ENCODE measurements at regions of chr10 and their contacts with region 1.

Region 1: DNA sequence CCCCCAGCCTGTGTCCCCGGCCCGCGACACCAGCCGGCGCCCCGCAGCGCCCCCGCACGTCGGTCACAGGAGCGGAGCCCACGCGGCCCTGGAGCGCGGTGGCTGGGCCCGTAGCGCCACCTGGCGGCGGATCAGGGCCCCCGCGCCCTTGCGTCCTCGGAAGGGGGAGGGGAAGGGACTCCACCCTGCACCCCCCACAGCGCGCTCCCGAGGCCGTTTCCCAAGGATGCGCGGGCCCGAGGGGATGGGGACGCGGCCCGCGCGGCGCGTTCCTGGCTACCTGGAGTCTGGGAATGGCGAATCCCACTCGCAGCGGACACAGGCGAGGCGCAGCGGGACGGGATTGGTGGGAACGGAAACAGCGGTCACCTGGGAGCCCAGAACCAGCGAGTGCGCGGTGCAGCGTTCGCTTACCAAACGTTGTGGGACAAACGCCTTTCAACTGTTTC is 23.8 kb upstream of the MKI67 start:
- DNase-seq: no peak
- ATAC-seq: peak; percentile 94
- H3K4me3 ChIP-seq: peak overlapping the region; percentile 86
- H3K27ac ChIP-seq: no peak overlapping the region
- H3K4me1 ChIP-seq: peaks cover 8% of the 10 kb centered on the region
- H3K27me3 ChIP-seq: no peaks in the 10 kb centered on the region; a peak in 1 of 4 replicates
- CTCF ChIP-seq: peak; percentile 80 to 99 (median 90)
- EP300 ChIP-seq: no peak
- POLR2A ChIP-seq: no peak
- RAD21 ChIP-seq: peak; percentile 93

Region 2: GRCh38 chr10:127715782-127716378 is 434.2 kb before region 1 on chr10:
- CTCF ChIA-PET with region 1: no interaction called
- POLR2A ChIA-PET with region 1: no interaction called
- RAD21 ChIA-PET with region 1: no interaction called
- SMC1A ChIA-PET with region 1: no interaction called
- in situ Hi-C with region 1: no loop called
- intact Hi-C with region 1: loop called (anchors 10 kb)
- DNase-seq: no peak
- ATAC-seq: no peak
- H3K4me3 ChIP-seq: no peak overlapping the region
- H3K27ac ChIP-seq: no peak overlapping the region
- H3K4me1 ChIP-seq: no peaks in the 10 kb centered on the region
- H3K27me3 ChIP-seq: no peaks in the 10 kb centered on the region
- CTCF ChIP-seq: peak; percentile 16 to 49 (median 34); a peak in 4 of 6 replicates
- EP300 ChIP-seq: no peak
- POLR2A ChIP-seq: no peak
- RAD21 ChIP-seq: peak; percentile 51

Region 3: GRCh38 chr10:127738512-127739424 is 411.3 kb before region 1 on chr10:
- CTCF ChIA-PET with region 1: no interaction called
- POLR2A ChIA-PET with region 1: no interaction called
- RAD21 ChIA-PET with region 1: no interaction called
- SMC1A ChIA-PET with region 1: no interaction called
- in situ Hi-C with region 1: no loop called
- intact Hi-C with region 1: no loop called
- DNase-seq: no peak
- ATAC-seq: no peak
- H3K4me3 ChIP-seq: no peak overlapping the region
- H3K27ac ChIP-seq: no peak overlapping the region
- H3K4me1 ChIP-seq: no peaks in the 10 kb centered on the region
- H3K27me3 ChIP-seq: peaks cover 0 to 1% of the 10 kb centered on the region in 2 experiments; a peak in 2 of 4 replicates
- CTCF ChIP-seq: no peak
- EP300 ChIP-seq: no peak
- POLR2A ChIP-seq: no peak
- RAD21 ChIP-seq: no peak

Region 4: GRCh38 chr10:127906548-127907377 is 243.3 kb before region 1 on chr10 and contains the start of gene PTPRE:
- CTCF ChIA-PET with region 1: no interaction called
- POLR2A ChIA-PET with region 1: no interaction called
- RAD21 ChIA-PET with region 1: no interaction called
- SMC1A ChIA-PET with region 1: no interaction called
- in situ Hi-C with region 1: no loop called
- intact Hi-C with region 1: loop called (anchors 10 kb)
- DNase-seq: no peak
- ATAC-seq: peak; percentile 97
- H3K4me3 ChIP-seq: no peak within 1 kb of the TSS
- H3K27ac ChIP-seq: no peak within 1 kb of the TSS
- H3K4me1 ChIP-seq: no peaks in the 10 kb centered on the region
- H3K27me3 ChIP-seq: no peaks in the 10 kb centered on the region; a peak in 2 of 4 replicates
- CTCF ChIP-seq: peak; percentile 35 to 45 (median 39); a peak in 4 of 6 replicates
- EP300 ChIP-seq: no peak
- POLR2A ChIP-seq: no peak
- RAD21 ChIP-seq: peak; percentile 24; the same call in 1 of the 2 replicates
- polyA plus RNA-seq, gene PTPRE: 5.8 to 6.7 TPM

Region 5: DNA sequence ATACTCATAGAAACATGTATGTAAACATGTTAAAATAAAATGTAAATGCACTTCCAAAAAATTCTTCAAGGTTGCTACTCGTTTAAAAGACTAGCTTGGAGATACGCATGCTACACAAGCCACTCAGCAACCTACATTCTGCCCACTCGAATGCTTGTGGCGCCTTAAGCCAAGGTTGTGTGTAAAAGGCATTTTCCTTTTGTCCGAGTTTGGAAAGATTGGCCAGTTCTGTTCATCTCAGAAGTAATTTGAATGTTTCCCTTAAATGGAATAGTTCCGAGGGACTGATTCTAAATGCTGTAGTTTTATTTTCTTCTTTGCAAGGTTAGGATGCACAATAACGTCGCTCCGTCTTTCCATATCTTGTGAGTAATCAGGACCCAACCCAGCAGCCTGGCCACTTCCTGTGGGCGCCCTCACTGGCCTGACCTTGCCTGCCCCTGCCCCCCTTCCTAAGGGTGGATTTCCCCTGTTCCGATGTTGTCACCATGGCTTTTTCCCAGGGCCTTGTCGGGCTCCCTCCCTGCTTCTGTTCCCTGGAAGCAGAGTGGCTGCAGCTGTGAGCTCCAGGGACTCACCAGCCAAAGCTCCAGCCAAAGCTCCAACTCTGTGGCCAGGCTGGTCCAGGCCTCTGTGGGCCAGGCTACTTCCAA is 172.6 kb before region 1 on chr10:
- CTCF ChIA-PET with region 1: no interaction called
- POLR2A ChIA-PET with region 1: no interaction called
- RAD21 ChIA-PET with region 1: no interaction called
- SMC1A ChIA-PET with region 1: no interaction called
- in situ Hi-C with region 1: no loop called
- intact Hi-C with region 1: no loop called
- DNase-seq: no peak
- ATAC-seq: no peak
- H3K4me3 ChIP-seq: no peak overlapping the region
- H3K27ac ChIP-seq: no peak overlapping the region
- H3K4me1 ChIP-seq: no peaks in the 10 kb centered on the region
- H3K27me3 ChIP-seq: peaks cover 0 to 1% of the 10 kb centered on the region in 2 experiments; a peak in 1 of 4 replicates
- CTCF ChIP-seq: no peak
- EP300 ChIP-seq: no peak
- POLR2A ChIP-seq: no peak
- RAD21 ChIP-seq: no peak

Region 6: GRCh38 chr10:128078136-128078969 is 71.7 kb before region 1 on chr10:
- CTCF ChIA-PET with region 1: interaction called, 25 read pairs
- POLR2A ChIA-PET with region 1: no interaction called
- RAD21 ChIA-PET with region 1: interaction called, 4 read pairs
- SMC1A ChIA-PET with region 1: interaction called, 5 read pairs
- in situ Hi-C with region 1: no loop called
- intact Hi-C with region 1: loop called (anchors 1 kb)
- DNase-seq: no peak
- ATAC-seq: peak; percentile 95
- H3K4me3 ChIP-seq: no peak overlapping the region
- H3K27ac ChIP-seq: no peak overlapping the region
- H3K4me1 ChIP-seq: no peaks in the 10 kb centered on the region
- H3K27me3 ChIP-seq: no peaks in the 10 kb centered on the region
- CTCF ChIP-seq: peak; percentile 77 to 89 (median 84)
- EP300 ChIP-seq: no peak
- POLR2A ChIP-seq: no peak
- RAD21 ChIP-seq: peak; percentile 88

Region 7: DNA sequence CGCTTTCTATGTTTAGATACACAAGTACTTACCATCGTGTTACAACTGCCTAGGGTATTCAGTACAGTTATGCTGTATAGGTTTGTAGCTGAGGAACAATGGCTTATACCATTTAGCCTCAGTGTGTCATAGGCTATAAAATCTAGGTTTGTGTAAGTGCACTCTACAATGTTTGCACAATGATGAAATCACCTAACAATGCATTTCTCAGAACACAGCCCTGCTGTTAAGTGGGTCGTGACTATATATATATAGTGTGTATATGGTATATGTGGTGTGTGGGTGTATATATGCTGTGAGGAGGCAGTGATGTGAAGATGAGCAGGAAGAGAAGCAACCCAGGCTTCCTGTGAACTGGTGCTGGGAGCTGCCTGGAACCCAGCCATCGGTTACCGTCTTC is 41.8 kb after region 1 on chr10:
- CTCF ChIA-PET with region 1: no interaction called
- POLR2A ChIA-PET with region 1: no interaction called
- RAD21 ChIA-PET with region 1: no interaction called
- SMC1A ChIA-PET with region 1: no interaction called
- in situ Hi-C with region 1: no loop called
- intact Hi-C with region 1: no loop called
- DNase-seq: no peak
- ATAC-seq: no peak
- H3K4me3 ChIP-seq: no peak overlapping the region
- H3K27ac ChIP-seq: no peak overlapping the region
- H3K4me1 ChIP-seq: no peaks in the 10 kb centered on the region
- H3K27me3 ChIP-seq: no peaks in the 10 kb centered on the region; a peak in 1 of 4 replicates
- CTCF ChIP-seq: no peak
- EP300 ChIP-seq: no peak
- POLR2A ChIP-seq: no peak
- RAD21 ChIP-seq: no peak

Region 8: DNA sequence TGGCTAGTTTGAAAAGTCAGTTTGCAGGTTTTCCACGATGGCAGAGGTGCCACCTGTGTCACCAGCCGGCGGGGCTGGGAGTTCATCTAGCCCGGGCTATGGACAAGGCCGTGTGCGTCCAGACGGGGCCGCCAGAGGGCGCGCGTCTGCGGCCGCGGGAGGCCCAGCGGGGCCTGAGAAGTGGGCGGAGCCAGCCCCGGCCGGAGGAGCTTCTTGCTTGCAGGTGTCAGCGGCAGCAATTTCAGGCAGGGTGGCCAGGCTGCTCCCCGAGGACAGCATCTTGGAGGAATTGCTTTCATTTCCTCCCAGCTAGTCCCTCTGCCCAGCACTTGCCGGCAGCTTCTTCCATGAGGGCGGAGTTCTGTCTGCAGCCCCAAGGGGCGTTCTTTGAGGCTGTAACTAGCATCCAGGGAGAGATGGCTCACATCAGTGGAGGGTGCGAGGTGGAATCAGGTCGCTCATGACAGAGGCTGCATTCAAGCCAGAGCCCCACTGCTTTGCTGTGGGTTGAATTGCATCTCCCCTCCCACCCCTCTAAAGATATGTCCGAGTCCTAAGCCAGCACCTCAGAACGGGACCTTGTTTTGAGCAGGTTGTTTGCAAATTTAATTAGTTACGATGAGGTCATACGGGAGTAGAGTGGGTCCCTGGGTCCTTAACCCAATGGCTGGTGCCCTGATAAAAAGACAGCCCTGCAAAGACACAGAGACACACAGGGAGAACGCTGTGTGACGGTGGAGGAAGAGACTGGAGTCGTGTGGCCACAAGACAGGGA is 62.1 kb after region 1 on chr10:
- CTCF ChIA-PET with region 1: no interaction called
- POLR2A ChIA-PET with region 1: no interaction called
- RAD21 ChIA-PET with region 1: no interaction called
- SMC1A ChIA-PET with region 1: no interaction called
- in situ Hi-C with region 1: no loop called
- intact Hi-C with region 1: no loop called
- DNase-seq: peak; percentile 15
- ATAC-seq: peak; percentile 99
- H3K4me3 ChIP-seq: no peak overlapping the region
- H3K27ac ChIP-seq: no peak overlapping the region
- H3K4me1 ChIP-seq: no peaks in the 10 kb centered on the region
- H3K27me3 ChIP-seq: peaks cover 0 to 4% of the 10 kb centered on the region in 2 experiments; a peak in 3 of 4 replicates
- CTCF ChIP-seq: peak; percentile 92 to 96 (median 95)
- EP300 ChIP-seq: no peak
- POLR2A ChIP-seq: no peak
- RAD21 ChIP-seq: 0 out of 2 replicates have a peak, but pooled peaks have one; percentile 26